ENCODE measurements at regions of chr18 and their contacts with region 1.

Region 1: GRCh38 chr18:36798738-36799473 is 29.9 kb downstream of the TPGS2 start:
- DNase-seq: no peak
- H3K4me3 ChIP-seq: no peak overlapping the region
- H3K27ac ChIP-seq: no peak overlapping the region
- H3K4me1 ChIP-seq: 0 out of 7 replicates have a peak, but pooled peaks cover 0 to 3% (median 0%) of the 10 kb centered on the region in 4 experiments
- H3K27me3 ChIP-seq: no peaks in the 10 kb centered on the region
- CTCF ChIP-seq: no peak
- EP300 ChIP-seq: no peak
- POLR2A ChIP-seq: no peak
- RAD21 ChIP-seq: no peak

Region 2: DNA sequence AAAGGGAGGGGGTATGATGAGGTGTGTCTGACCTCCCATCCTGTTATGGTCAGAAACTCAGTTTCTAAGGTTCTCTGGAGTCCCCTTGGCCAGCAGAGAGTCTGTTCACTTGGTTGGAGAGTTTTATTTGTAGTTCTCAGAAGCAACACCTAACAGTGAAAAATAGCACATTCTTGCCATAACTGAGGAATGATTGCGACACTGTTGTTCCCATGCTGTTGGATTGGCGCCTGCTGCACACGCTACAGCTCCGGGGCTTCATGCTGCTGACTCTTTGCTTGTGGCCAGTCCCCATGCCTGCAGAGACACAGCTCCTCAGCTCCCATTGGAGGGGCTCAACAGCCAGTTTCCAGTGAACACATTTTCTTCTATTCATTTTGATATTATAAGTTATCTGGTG is 12.2 kb before region 1 on chr18:
- CTCF ChIA-PET with region 1: no interaction called
- POLR2A ChIA-PET with region 1: interaction called, 12 read pairs
- DNase-seq: no peak
- H3K4me3 ChIP-seq: no peak overlapping the region
- H3K27ac ChIP-seq: no peak overlapping the region
- H3K4me1 ChIP-seq: no peaks in the 10 kb centered on the region
- H3K27me3 ChIP-seq: no peaks in the 10 kb centered on the region
- CTCF ChIP-seq: no peak
- EP300 ChIP-seq: no peak
- POLR2A ChIP-seq: no peak
- RAD21 ChIP-seq: no peak